ENCODE measurements at regions of chr7 and their contacts with region 1.

Region 1: DNA sequence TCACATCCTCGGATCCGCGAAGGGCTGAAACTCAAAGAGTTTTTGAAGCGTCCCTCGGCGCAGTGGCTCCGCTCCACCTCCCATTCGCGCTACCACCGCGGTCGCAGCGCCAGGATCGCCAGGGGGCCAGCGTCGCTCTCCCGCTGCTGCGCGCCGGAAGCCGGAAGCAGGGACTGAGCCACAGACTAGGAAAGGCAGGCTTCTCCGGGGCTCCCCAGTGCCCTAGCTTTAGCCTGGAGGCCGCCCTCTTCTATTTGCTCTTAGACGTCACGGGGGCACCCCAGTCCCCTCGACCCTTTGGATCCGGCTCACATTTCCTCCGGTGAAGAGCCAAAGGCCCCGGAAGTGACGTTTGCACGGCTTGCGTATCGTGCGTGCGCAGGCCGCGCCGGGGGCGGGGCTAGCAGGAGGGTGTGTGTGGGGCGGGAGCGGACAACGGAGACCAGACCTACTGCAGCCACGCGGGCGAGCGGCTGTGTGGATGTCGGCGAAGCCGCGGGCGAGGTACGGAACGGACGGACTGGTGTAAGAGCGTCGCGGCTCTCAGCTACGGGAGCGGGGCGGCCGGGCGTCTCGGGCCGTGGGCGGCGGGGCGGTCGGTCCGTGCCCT is 25.5 kb downstream of the KCTD7 start:
- DNase-seq: peak; percentile 100
- ATAC-seq: peak; percentile 94
- H3K4me3 Mint-ChIP-seq: peak overlapping the region; percentile 100
- H3K27ac Mint-ChIP-seq: peak overlapping the region; percentile 98
- H3K4me1 Mint-ChIP-seq: peaks cover 32% of the 10 kb centered on the region
- H3K27me3 Mint-ChIP-seq: no peaks in the 10 kb centered on the region

Region 2: DNA sequence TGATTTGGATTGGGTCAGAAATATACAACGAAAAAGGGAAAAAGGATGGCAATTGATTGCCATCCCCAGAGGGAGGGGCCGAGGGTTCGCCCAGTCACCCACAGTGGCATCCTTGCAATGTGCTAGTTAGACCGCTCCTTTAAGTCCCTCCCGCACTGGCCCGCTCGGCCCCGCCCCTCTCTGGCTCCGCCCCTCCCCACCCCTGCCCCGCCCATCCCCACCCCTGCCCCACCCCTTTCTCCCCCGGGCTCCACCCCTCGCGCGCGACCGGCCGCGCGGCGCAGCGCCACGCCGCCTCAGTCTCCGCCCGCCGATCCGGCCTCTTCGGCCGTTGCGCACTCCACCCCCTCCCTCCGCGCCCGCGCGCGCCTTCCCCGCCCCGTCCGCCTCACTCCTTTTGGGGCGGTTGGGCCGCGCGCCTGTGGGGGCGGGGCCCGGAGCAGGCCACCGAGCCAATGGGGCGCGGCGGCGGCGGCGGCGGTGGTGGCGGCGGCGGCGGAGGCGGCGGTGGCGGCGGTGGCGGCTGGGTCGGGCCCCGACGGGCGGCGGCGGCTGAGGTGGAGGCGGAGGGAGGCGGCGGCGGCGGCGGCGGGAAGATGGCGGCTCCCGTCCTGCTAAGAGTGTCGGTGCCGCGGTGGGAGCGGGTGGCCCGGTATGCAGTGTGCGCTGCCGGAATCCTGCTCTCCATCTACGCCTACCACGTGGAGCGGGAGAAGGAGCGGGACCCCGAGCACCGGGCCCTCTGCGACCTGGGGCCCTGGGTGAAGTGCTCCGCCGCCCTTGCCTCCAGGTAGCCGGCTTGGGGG is 781.2 kb before region 1 on chr7 and contains the start of gene VKORC1L1:
- CTCF ChIA-PET with region 1: no interaction called
- POLR2A ChIA-PET with region 1: no interaction called
- intact Hi-C with region 1: loop called in 1 of 2 experiments (anchors 10 kb)
- DNase-seq: peak; percentile 98
- ATAC-seq: peak; percentile 96
- H3K4me3 Mint-ChIP-seq: peak within 1 kb of the TSS; percentile 84
- H3K27ac Mint-ChIP-seq: peak within 1 kb of the TSS; percentile 75
- H3K4me1 Mint-ChIP-seq: peaks cover 7% of the 10 kb centered on the region
- H3K27me3 Mint-ChIP-seq: no peaks in the 10 kb centered on the region
- total RNA-seq, gene VKORC1L1: 16.5 to 17.6 TPM

Region 3: DNA sequence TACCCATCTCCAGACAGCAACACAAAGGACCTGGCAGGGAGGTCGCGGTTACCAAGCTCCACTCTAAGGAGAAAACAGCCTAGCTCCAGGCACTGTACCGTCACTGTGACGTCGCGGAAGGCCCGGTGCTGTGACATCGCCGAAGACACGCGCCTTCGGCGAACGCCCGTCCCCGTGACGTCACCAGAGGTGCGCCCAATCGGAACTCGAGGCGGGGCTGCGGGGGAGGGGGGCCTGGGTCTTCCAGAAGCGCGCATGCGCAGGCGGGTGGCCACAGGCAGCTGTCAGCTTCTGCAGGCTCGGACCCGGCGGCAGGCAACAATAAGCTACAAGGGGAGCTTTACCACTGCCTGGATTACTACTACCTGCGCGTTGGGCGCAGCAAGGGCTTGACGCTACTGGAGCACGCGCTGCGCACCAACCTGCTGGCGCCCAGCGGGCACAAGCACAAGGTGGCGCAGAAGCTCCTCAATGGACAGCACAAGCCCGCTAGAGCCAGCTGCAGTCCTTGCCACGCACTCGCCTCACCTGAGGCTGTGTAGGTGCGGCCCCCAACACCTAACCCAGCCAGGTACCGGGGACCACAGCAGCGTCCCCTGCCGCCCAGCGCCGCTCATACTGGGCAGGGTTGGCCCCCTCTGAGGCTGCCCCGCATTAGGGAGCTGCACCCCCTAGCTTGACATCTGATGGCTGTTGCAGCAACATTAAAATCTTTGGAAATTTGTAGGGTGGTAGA is 240.7 kb before region 1 on chr7:
- CTCF ChIA-PET with region 1: no interaction called
- POLR2A ChIA-PET with region 1: no interaction called
- intact Hi-C with region 1: loop called in 1 of 2 experiments (anchors 10 kb)
- DNase-seq: peak; percentile 93
- ATAC-seq: peak; percentile 89
- H3K4me3 Mint-ChIP-seq: peak overlapping the region; percentile 64
- H3K27ac Mint-ChIP-seq: no peak overlapping the region
- H3K4me1 Mint-ChIP-seq: peaks cover 7% of the 10 kb centered on the region
- H3K27me3 Mint-ChIP-seq: no peaks in the 10 kb centered on the region

Region 4: GRCh38 chr7:66591799-66592596 is 62.2 kb before region 1 on chr7:
- CTCF ChIA-PET with region 1: no interaction called
- POLR2A ChIA-PET with region 1: interaction called, 3 read pairs
- intact Hi-C with region 1: loop called (anchors 1 kb)
- DNase-seq: peak; percentile 96
- ATAC-seq: peak; percentile 98
- H3K4me3 Mint-ChIP-seq: peak overlapping the region; percentile 94
- H3K27ac Mint-ChIP-seq: peak overlapping the region; percentile 98
- H3K4me1 Mint-ChIP-seq: peaks cover 46% of the 10 kb centered on the region
- H3K27me3 Mint-ChIP-seq: no peaks in the 10 kb centered on the region

Region 5: DNA sequence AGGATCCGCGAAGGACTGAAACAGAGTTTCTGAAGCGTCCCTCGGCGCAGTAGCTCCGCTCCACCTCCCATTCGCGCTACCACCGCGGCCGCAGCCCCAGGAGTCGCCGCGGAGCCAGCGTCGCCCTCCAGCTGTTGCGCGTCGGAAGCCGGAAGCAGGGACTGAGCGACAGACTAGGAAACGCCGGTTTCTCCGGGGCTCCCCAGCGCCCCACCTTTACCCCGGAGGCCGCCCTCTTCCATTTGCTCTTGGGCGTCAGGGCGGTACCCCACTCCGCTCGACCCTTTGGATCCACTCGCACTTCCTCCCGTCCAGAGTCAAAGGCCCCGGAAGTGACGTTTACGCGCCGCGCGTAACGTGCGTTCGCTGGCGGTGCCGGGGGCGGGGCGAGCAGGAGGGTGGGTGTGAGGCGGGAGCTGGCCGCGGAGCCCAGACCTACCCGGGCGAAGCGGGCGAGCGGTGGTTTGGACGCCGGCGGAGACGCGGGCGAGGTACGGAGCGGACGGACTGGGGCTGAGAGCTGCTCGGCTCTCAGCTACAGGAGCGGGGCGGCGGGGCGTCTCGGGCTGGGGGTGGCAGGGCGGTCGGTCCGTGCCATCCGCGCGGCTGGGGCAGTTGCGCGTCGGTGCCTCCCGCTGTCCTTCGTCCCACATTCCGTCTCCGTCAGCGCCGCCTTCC is 86.2 kb after region 1 on chr7 and contains the start of gene RABGEF1:
- CTCF ChIA-PET with region 1: interaction called, 3 read pairs
- POLR2A ChIA-PET with region 1: interaction called, 4 read pairs
- intact Hi-C with region 1: loop called (anchors 1 kb)
- DNase-seq: peak; percentile 98
- ATAC-seq: peak; percentile 89
- H3K4me3 Mint-ChIP-seq: peak within 1 kb of the TSS; percentile 98
- H3K27ac Mint-ChIP-seq: peak within 1 kb of the TSS; percentile 91
- H3K4me1 Mint-ChIP-seq: peaks cover 34% of the 10 kb centered on the region
- H3K27me3 Mint-ChIP-seq: no peaks in the 10 kb centered on the region
- total RNA-seq, gene RABGEF1: 19.3 to 22.5 TPM

Region 6: GRCh38 chr7:66920769-66921395 is 266.7 kb after region 1 on chr7 and contains the start of gene TMEM248:
- CTCF ChIA-PET with region 1: no interaction called
- POLR2A ChIA-PET with region 1: no interaction called
- intact Hi-C with region 1: loop called in 1 of 2 experiments (anchors 1 kb)
- DNase-seq: peak; percentile 96
- ATAC-seq: peak; percentile 90
- H3K4me3 Mint-ChIP-seq: peak within 1 kb of the TSS; percentile 99
- H3K27ac Mint-ChIP-seq: peak within 1 kb of the TSS; percentile 98
- H3K4me1 Mint-ChIP-seq: peaks cover 33% of the 10 kb centered on the region
- H3K27me3 Mint-ChIP-seq: no peaks in the 10 kb centered on the region
- total RNA-seq, gene TMEM248: 70.5 to 85.8 TPM

Measured in activated CD4-positive, alpha-beta T cell treated with anti-CD3 and anti-CD28 coated beads for 36 hours (primary cell).